PC-9 (cell line): ENCODE measurements at regions of chr7 and their contacts with region 1.

Region 1: DNA sequence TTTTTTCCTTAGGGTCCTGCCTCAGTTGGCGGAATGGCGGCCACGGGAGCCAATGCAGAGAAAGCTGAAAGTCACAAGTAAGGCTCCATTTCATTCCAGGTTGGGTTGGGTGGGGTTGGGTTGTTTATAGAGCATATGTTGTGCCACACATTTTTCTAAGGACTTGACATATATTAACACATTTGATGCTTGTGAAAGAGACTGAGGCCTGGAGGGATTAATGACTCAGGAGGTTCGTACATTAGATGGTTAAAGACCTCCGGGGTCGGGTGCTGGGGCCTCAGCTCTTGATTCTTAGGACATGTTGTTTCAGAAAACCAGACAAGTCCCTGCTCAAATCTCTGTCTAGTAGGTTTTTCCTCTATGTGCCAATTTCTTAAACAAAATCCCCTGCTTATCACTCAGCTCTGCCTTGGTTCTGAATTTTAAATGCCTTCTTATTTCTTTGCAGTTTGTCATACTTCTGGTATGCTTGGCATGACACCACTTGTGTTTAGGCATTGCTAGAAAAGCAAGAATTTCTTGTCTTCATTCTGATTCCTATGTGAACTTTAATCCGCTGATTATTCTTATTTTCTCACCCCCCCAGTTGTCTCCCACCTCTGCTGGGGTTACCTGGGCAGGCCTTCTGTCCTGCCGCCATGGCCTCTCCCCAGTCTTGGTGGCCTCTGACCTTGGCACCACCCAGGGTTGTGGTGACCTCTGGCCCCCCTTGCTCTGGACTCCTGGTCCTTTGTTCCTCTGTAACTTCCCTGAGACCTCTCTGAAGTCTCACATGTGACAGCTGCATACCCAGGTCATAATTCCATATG is 5.9 kb downstream of the UPP1 start:
- DNase-seq: peak; percentile 42 to 95
- H3K4me3 ChIP-seq: peak overlapping the region; percentile 26; the same call in 1 of the 2 replicates
- H3K27ac ChIP-seq: peak overlapping the region; percentile 98
- H3K4me1 ChIP-seq: peaks cover 60% of the 10 kb centered on the region
- H3K27me3 ChIP-seq: no peaks in the 10 kb centered on the region
- CTCF ChIP-seq: no peak

Region 2: DNA sequence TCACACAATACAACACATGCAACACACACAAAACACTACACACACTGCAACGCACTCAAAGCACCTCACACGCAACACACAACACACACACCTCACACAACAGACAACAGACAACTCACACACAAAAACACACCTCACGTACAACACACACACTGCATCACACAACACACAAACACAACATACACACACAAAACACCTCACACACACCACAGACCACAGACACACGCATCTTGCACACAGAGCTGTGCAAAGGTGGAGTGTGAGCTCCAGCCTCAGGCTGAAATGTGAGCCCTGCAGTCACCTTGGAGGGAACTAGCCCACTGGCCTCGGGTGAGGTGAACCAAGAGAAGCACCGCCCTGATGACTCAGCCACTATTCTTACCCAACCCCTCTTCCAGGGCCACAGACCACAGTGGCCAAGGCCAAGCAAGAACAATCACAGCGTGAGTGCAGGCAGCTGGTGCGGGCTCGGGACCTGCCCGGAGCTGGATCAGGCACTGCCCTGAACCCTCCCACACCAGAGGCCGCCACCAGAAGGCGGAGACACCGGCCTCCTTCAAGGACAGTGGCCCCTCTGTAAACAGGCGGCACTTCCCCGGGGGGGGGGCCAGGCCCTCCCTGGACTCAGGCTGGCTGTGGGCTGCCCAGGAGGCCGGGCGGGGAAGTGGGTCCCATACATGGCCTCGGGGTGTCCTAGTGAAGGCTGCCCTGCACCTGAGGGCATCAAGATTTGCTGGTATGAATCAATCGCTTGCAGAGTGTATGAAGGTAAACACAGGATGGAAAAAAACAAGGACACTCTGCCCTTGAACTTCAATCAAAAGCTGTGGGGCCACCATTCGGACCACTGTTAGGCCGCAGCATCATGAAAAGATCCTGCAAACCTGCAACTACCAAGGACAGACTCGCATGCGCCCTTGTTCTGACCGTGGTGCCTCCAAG is 619.7 kb before region 1 on chr7:
- CTCF ChIA-PET with region 1: no interaction called
- POLR2A ChIA-PET with region 1: no interaction called
- intact Hi-C with region 1: no loop called
- DNase-seq: peak; percentile 99 to 100
- H3K4me3 ChIP-seq: peak overlapping the region; percentile 16; the same call in 1 of the 2 replicates
- H3K27ac ChIP-seq: peak overlapping the region; percentile 87
- H3K4me1 ChIP-seq: peaks cover 58% of the 10 kb centered on the region
- H3K27me3 ChIP-seq: no peaks in the 10 kb centered on the region
- CTCF ChIP-seq: no peak; the same call in 1 of the 2 replicates

Region 3: DNA sequence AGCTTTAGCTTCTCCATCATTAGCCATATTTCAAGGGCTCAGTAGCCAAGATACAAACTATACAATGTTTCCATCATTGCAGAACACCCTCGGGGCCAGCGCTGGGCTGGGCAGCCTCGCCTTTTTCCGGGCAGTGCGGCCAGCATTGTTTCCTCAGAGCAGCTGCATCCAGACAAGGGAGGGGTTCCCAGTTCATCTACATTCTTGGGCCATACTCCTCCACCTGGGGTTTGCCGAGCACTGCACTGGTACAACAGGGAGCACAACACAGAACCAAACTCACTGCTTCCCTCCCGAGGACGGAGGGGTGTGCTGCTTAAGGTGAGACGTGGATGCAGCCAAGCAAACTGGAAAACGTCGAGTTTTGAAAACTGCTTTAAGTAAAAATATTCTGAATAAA is 144.2 kb before region 1 on chr7:
- CTCF ChIA-PET with region 1: interaction called, 6 read pairs
- POLR2A ChIA-PET with region 1: interaction called, 10 read pairs
- intact Hi-C with region 1: no loop called
- DNase-seq: peak; percentile 64 to 65
- H3K4me3 ChIP-seq: no peak overlapping the region
- H3K27ac ChIP-seq: peak overlapping the region; percentile 52
- H3K4me1 ChIP-seq: peaks cover 26% of the 10 kb centered on the region
- H3K27me3 ChIP-seq: no peaks in the 10 kb centered on the region
- CTCF ChIP-seq: no peak

Region 4: DNA sequence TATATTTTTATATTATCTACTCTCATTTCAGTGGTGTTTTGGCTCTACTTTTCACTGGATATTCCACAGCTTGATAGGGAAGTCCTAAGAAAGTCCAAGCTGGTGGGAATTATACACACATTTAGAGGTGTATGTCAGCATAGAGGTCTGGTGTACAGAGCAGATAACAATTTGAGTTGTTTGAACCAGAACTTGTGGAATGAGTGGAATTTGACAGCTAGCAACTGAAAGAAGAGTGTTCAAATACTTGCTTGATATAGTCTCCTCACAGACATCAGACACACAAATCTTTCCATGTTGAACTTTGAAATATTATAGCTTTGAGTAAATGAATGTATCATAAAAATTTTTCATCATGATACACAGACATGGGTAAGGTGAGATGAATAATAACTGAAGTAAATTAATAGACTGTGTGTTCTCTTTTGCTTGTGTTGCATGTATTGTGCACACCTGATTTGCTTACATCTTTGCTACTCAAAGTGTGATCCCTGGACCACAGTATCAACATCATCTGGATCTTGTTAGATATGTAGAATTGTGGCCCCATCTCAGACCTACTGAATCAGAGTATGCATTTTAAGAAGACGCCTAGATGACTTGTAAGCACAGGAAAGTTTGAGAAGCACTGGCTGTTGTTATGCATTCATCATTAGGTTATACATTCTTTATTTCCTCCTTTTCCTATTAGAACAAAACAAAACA is 167.8 kb after region 1 on chr7:
- CTCF ChIA-PET with region 1: no interaction called
- POLR2A ChIA-PET with region 1: no interaction called
- intact Hi-C with region 1: no loop called
- DNase-seq: no peak
- H3K4me3 ChIP-seq: no peak overlapping the region
- H3K27ac ChIP-seq: no peak overlapping the region
- H3K4me1 ChIP-seq: no peaks in the 10 kb centered on the region
- H3K27me3 ChIP-seq: peaks cover 35% of the 10 kb centered on the region; the same call in 1 of the 2 replicates
- CTCF ChIP-seq: no peak

Region 5: DNA sequence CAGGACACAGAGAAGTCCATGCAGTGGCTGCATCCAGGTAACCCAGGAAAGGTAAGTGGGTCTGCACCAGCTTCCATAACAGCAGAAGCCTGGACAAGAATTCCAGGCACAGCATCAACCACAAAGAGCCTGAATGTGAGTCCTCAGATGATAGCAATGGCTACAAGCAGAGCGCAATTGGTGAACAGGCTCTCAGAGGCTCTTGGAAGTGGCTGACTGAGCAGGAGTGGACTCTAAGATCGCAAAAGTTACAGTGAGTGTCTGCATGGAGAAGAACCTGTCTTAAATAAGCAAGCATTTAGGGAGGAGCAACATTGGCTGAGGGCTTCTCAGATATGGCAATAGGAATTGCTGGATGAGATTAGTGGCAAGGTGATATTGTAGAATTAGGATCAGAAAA is 1636.9 kb after region 1 on chr7:
- CTCF ChIA-PET with region 1: no interaction called
- POLR2A ChIA-PET with region 1: no interaction called
- intact Hi-C with region 1: no loop called
- DNase-seq: no peak
- H3K4me3 ChIP-seq: no peak overlapping the region
- H3K27ac ChIP-seq: no peak overlapping the region
- H3K4me1 ChIP-seq: no peaks in the 10 kb centered on the region
- H3K27me3 ChIP-seq: no peaks in the 10 kb centered on the region
- CTCF ChIP-seq: no peak